Adrenal gland (tissue), 19 donors: ENCODE measurements at regions of chr16 and their contacts with region 1.

Region 1: DNA sequence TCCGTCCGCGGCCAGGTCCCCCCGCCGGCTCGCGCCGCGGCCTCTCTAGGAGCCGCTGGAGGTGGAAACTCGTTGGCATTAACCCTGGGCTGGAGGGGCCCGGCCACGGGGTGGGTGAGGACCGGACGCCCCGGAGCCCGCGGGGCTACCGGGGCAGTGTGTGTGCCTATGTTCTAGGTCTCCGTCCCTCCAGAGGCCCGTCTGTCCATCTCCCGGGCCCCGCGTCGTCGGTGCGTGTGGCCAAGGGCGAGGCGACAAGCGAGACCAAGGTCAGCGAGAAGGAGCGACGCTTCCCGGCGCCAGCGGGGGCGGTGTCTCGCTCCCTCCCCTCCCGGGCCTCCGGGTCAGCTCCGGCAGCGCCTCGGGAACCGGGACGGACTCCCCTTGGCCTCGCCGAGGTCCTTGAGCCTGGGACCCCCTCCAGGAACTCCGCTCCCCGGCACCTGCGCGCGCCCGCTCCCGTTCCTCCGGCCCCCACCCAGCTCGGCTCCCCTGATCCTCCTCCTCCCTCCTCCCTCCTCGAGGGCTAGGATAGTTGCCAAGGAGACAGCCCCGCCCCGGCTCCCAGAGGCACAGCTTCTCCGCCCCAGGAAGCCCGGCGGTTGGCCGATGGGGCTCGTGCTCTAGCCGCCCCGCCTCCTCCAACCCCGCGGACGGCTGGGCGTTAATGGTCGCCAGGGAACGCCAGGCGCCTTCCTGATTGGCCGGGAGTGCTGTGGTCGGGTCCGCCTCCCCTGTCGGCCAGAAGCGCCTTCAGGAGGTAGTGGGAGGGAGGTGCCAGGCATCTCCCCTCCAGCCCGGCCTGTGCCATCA is 663 bp upstream of the ZNF768 start:
- DNase-seq: peak; percentile 98 to 99 (median 99)
- H3K4me3 ChIP-seq: peak overlapping the region in 3 of 4 donors; percentile 35 to 86 (median 51)
- H3K27ac ChIP-seq: peak overlapping the region; percentile 94 to 98 (median 95)
- H3K4me1 ChIP-seq: peaks cover 7 to 13% of the 10 kb centered on the region in 2 donors
- H3K27me3 ChIP-seq: no peaks in the 10 kb centered on the region
- CTCF ChIP-seq: peak in 5 of 6 experiments; percentile 14 to 53 (median 45)
- POLR2A ChIP-seq: peak; percentile 42 to 71

Region 2: DNA sequence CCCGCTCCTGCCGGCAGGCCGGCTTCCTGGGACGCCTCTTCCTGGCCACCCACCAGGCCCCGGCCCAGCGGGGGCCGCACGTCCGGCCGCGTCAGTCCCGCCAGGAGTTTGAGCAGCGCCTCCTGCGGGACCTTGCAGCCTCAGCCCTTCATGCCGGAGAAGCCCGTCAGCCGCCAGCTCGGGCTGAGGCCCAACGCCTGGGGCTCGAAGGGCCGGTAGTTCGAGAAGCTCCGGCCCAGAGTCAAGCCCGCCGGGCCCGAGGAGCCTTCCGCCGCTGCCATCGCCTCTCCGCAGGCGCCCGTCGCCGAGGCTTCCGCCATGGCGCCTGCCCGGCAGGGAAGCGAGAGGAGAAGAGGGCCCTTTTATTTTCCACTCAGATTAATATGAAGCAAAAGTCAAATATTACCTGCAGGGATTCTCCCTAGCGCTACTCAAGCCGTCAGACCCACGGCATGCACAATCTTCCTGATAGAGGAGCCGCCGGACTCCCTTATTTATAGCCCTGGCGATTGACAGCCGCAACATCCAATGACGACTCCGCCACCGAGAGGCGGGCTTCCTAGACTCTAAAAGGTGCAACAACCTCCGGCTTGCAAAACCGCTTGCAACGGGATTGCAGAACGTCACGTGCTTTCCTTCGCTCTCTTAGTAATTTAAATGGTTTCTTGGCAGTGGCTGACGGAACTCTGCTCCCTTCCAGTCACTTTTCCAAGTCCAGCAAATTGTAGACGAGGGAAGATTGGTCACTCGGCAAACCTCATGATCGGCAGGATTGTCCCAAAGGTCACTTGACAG is 81.4 kb before region 1 on chr16 and contains the start of gene SEPHS2:
- intact Hi-C with region 1: loop called (anchors 5 to 10 kb)
- DNase-seq: peak; percentile 97 to 100 (median 99)
- H3K4me3 ChIP-seq: peak within 1 kb of the TSS; percentile 28 to 94 (median 77)
- H3K27ac ChIP-seq: peak within 1 kb of the TSS; percentile 70 to 96 (median 87)
- H3K4me1 ChIP-seq: peaks cover 11 to 25% of the 10 kb centered on the region in 2 donors
- H3K27me3 ChIP-seq: no peaks in the 10 kb centered on the region
- CTCF ChIP-seq: peak in 5 of 6 experiments; percentile 13 to 36 (median 26)
- POLR2A ChIP-seq: peak; percentile 88 to 92
- total RNA-seq, gene SEPHS2: 10.7 to 60.5 (median 46.2) TPM